Mammary epithelial cell (primary cell): ENCODE measurements at regions of chr11 and their contacts with region 1.

Region 1: DNA sequence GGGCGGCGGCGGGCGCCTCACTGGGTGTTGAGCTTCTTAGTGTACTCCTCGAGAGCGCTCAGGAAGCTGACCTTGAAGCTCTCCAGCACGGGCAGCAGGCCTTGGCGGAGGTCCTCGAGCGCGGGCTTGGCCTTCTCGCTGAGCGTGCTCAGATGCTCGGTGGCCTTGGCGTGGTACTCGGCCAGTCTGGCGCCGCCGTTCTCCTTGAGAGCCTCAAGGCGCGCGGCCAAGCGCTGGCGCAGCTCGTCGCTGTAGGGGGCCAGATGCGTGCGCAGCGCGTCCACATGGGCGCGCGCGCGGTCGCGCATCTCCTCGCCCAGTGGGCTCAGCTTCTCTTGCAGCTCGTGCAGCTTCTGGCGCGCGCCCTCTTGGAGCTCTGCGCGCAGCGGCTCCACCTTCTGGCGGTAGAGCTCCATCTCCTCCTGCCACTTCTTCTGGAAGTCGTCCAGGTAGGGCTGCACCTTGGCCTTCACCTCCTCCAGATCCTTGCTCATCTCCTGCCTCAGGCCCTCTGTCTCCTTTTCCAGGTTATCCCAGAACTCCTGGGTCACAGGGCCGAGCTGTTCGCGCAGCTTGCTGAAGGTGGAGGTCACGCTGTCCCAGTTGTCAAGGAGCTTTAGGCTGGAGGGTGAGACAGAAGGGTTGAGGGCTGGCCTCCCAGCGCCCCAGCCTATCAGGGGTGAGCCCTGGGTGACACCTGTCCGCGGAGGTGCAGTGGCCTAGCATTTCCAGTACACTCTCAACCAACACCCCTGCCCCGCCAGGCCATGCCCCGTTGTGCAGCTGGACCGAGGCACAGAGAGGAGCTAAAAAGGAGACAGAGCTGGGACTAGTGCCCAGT is 1.4 kb downstream of the APOA1 start:
- DNase-seq: peak; percentile 85
- H3K4me3 ChIP-seq: peak overlapping the region in 2 of 3 experiments; percentile 34 to 51
- H3K27ac ChIP-seq: no peak overlapping the region
- H3K4me1 ChIP-seq: peaks cover 8% of the 10 kb centered on the region
- H3K27me3 ChIP-seq: no peaks in the 10 kb centered on the region
- CTCF ChIP-seq: peak; percentile 58 to 74

Region 2: DNA sequence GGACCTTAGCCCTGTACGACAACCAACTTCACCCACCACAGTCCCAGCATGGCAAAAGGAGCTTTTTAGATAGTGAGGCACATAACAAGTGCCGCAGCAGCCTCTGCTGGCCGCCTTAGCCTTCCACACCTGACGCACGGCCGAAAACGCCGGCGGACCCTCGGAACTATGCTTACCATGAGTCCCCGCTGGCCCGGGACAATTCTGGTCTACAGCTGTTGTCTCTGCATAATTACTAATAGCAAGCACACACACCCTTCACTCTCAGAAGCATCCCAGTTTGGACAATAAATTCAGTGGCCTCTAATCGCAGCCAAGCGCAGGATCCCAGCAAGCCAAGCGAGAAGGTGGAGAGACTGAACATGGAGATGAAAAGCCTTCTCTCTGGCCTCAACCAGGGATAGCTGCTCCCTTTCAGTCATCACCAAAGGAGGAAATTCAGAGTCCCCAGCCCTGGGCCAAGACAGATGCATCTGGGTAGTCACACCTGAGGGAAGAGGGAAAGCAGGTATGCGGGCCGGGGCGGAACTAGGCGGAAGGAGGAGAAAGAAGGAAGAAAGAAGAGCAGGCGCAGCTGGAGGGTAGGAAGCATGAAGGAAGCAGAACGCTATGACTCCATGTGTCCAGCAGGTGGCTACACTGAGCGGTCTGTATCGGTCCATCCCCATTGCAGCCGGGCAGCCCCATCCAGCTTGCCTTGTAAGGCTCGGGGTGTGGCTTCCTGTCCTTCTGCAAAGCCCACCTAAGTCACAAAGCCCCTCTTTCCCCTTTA is 103.6 kb before region 1 on chr11:
- CTCF ChIA-PET with region 1: interaction called, 7 read pairs
- dilution Hi-C with region 1: no loop called
- in situ Hi-C with region 1: no loop called
- intact Hi-C with region 1: loop called (anchors 2 kb)
- DNase-seq: peak; percentile 40
- H3K4me3 ChIP-seq: no peak overlapping the region
- H3K27ac ChIP-seq: no peak overlapping the region
- H3K4me1 ChIP-seq: no peaks in the 10 kb centered on the region
- H3K27me3 ChIP-seq: peaks cover 4% of the 10 kb centered on the region
- CTCF ChIP-seq: peak; percentile 84 to 88